ENCODE measurements at regions of chr6 and their contacts with region 1.

Region 1: DNA sequence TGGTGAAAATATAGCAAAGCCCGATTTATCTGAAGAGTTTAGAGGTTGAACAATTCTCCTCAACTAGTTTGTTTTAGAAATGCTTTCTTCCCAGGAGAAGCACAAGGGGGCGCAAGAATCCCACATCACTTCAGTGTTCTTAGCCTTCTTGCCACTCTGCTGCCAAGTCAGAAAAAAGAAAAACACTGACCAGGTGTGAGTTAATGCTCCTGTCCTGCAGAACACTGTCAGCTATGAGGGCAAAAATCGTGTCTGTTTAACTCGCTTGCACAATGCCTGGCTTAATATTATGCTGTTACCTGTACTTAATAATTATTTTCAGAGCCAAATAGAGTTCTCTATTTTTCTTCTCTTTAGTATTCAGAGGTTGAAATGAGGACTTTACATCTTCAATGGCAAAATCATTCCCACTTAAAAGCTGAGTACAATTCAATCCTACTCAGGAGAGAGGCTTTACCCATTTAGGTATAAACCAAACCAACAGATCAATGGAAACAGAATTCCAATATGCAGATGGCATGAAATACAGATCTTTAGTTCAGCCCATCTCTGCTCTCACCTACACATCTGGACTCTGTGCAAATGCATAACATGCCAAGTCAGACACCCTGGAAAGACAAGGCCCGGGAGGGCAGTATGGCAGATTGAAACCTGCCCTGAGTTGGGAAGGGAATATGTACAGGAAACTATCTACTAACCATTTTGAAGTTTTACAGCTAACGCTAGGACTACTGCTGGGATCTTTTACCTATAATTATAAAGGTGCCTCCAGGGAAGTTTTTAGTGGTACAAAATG is 71.4 kb upstream of the TULP1 start:
- DNase-seq: peak; percentile 83
- H3K4me3 ChIP-seq: no peak overlapping the region
- H3K27ac ChIP-seq: no peak overlapping the region
- H3K4me1 ChIP-seq: peaks cover 4% of the 10 kb centered on the region
- CTCF ChIP-seq: peak; percentile 98

Region 2: DNA sequence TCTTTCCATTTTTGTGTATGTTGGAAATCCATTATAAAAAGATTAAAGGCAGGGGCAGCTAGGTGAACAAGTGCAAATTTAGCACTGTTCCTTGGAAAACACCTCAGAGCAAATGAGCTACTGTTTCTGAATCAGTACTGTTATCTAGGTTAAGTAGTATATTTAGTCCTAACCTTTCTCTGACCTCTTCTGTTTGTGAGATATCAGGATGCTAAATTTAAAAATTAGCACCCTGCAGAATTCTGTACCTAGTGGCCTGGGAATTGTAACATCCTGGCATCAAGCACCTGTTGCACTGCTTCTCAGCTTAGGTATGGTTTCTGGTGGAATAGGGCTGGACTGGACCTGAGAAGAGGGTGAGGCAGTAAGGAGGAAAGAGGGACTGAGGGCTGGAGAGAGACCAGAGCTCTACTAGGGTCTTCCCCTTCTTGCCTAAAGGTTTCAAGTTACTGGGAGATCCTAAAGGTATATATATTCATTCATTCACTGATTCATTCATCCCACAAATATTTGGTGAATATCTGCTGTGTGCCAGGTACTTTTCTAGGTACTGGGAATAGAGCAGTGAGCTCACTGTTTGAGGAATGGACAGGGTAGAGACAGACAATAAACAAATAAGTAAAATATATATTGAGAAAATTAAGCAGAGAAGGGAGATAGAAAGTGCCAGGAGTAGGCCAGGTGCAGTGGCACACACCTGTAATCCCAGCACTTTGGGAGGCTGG is 319.4 kb before region 1 on chr6:
- CTCF ChIA-PET with region 1: no interaction called
- POLR2A ChIA-PET with region 1: interaction called, 10 read pairs
- intact Hi-C with region 1: no loop called
- DNase-seq: no peak
- H3K4me3 ChIP-seq: no peak overlapping the region
- H3K27ac ChIP-seq: no peak overlapping the region
- H3K4me1 ChIP-seq: peaks cover 26% of the 10 kb centered on the region
- CTCF ChIP-seq: no peak

Region 3: DNA sequence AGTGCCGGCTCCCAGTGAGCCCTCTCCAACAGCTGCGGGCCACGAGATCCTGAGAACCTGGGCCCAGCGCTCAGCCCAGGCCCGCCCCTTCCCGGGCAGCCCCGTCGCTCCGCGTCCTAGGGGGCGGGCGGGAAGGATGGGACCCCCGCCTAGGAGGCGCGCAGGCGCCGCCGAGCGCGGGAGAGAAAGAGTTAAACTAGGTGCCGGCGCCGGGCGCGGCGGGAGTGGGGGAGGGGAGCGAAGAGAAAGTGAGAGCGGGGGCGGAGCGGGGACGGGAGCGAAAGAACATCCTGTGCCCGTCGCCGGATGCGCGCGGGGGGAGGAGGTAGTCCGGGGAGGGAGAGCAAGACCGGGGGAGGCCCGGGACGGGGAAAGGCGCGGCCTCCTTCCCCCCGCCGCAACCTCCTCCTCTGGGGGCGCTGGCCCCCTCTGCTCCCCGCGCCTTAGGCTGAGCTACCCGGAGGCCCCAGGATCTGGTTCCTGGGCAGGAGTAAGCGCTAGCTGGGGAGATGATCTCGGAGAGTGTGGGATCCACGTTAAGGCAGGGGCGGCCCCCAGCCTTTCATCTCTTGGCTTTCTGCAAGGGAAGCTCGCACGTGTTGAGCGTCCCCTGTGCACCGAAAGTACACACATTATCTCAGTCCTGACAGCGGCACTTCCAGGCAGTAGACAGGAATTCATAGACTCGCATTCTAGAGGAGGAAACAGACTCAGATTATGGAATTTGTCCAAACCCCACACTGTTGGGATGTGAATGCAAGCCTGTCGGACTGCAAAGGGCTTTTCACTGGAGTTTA is 147.8 kb after region 1 on chr6:
- CTCF ChIA-PET with region 1: interaction called, 3 read pairs
- POLR2A ChIA-PET with region 1: interaction called, 4 read pairs
- intact Hi-C with region 1: loop called (anchors 1 kb)
- DNase-seq: peak; percentile 94
- H3K4me3 ChIP-seq: peak overlapping the region; percentile 76
- H3K27ac ChIP-seq: peak overlapping the region; percentile 96
- H3K4me1 ChIP-seq: peaks cover 71% of the 10 kb centered on the region
- CTCF ChIP-seq: peak; percentile 48; the same call in 1 of the 2 replicates

Region 4: GRCh38 chr6:35850208-35850607 is 266.1 kb after region 1 on chr6:
- CTCF ChIA-PET with region 1: no interaction called
- POLR2A ChIA-PET with region 1: no interaction called
- intact Hi-C with region 1: no loop called
- DNase-seq: no peak
- H3K4me3 ChIP-seq: no peak overlapping the region
- H3K27ac ChIP-seq: no peak overlapping the region
- H3K4me1 ChIP-seq: no peaks in the 10 kb centered on the region
- CTCF ChIP-seq: no peak